H1 (cell line): ENCODE measurements at regions of chr22 and their contacts with region 1.

Region 1: DNA sequence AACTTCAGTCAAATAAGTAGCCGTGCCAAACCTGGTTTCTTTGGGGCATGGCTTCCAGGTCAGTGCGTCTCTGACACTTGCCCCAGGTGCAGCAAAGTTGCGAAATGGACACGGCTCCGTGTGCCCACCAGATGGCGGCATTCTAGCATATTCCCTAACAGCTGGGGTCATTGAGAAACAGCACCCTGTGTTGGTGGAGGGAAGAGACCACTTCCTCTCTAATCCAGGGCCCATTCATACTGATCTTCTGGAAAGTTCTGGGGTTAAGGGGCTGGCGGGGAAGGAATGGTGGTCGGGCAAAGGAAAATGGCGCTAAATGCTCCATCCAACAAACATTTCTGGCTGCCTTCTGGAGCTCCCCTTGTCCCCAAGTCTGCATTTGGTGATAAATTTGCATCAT is 141.2 kb upstream of the TIMP3 start:
- DNase-seq: peak; percentile 36 to 80
- H3K4me3 ChIP-seq: no peak overlapping the region
- H3K27ac ChIP-seq: no peak overlapping the region
- H3K4me1 ChIP-seq: no peaks in the 10 kb centered on the region
- H3K27me3 ChIP-seq: no peaks in the 10 kb centered on the region; a peak in 3 of 7 replicates
- CTCF ChIP-seq: peak; percentile 85 to 91 (median 88)
- EP300 ChIP-seq: no peak
- POLR2A ChIP-seq: no peak
- RAD21 ChIP-seq: peak; percentile 82 to 84

Region 2: DNA sequence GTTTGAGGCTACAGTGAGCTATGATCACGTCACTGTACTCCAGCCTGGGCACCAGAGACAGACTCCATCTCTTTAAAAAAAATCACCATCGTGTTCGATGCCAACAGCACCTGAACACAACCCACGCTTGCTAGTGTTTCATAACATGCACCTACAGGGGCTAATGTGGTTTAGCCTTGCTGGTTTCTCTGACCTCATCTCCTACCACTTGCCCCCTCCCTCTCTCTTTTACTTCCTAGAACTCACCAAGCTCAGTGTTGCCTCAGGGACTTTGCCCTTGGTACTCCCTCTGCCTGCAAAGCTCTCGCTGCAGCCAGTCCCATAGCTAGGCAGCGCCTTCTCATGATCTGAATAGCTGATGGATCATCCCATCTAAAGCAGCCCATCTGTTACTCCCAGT is 85.9 kb before region 1 on chr22:
- CTCF ChIA-PET with region 1: no interaction called
- POLR2A ChIA-PET with region 1: no interaction called
- DNase-seq: no peak
- H3K4me3 ChIP-seq: no peak overlapping the region
- H3K27ac ChIP-seq: no peak overlapping the region
- H3K4me1 ChIP-seq: no peaks in the 10 kb centered on the region
- H3K27me3 ChIP-seq: peaks cover 0 to 5% (median 0%) of the 10 kb centered on the region in 4 experiments; a peak in 2 of 7 replicates
- CTCF ChIP-seq: no peak
- EP300 ChIP-seq: no peak
- POLR2A ChIP-seq: no peak
- RAD21 ChIP-seq: no peak

Region 3: DNA sequence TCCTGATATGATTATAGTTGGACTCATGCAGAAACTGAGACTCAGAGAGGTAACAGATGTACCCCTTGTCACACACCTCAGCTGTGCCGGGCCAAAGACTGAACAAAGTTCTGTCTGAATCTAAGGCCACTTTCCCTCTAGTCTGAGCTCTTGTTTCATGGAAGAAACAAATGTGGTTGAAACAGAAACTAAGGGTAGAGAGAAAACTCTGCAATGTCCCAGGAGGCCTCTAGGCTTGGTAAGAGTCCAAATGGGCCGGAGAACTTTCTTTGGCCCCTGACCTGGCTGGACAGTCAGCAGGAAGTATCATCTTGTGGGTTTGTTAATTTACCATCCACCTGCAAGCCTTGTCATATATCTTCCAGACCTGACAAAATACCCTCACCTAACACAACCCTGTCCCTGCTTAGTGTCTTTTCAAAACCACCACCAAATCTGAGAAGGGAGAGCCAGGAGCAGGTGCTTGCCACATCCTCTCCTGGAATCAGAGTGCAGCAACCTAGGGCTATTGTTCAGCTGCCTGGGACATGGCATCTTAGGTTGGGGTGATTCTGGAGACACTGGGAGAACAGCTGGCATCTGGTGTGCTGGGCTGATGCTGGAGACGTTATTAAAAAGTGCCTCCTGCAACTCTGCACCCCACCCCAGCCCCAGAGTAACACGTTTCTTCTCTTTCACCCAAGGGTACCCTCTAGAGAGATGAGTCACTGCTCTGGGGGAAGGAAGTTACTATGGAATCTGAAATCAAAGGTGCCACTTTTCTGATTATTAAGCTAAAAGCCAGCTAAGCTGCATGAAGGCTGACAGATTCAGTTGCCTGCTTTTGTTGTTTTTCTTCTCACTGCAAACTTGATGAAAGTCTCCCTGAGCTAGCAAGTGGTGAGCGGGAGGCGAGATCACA is 14.9 kb after region 1 on chr22:
- CTCF ChIA-PET with region 1: interaction called, 10 read pairs
- POLR2A ChIA-PET with region 1: no interaction called
- DNase-seq: no peak
- H3K4me3 ChIP-seq: no peak overlapping the region
- H3K27ac ChIP-seq: no peak overlapping the region
- H3K4me1 ChIP-seq: no peaks in the 10 kb centered on the region
- H3K27me3 ChIP-seq: no peaks in the 10 kb centered on the region; a peak in 1 of 7 replicates
- CTCF ChIP-seq: no peak
- EP300 ChIP-seq: no peak
- POLR2A ChIP-seq: no peak
- RAD21 ChIP-seq: no peak

Region 4: GRCh38 chr22:32706149-32706548 is 45.9 kb after region 1 on chr22:
- CTCF ChIA-PET with region 1: no interaction called
- POLR2A ChIA-PET with region 1: no interaction called
- DNase-seq: no peak
- H3K4me3 ChIP-seq: no peak overlapping the region
- H3K27ac ChIP-seq: no peak overlapping the region
- H3K4me1 ChIP-seq: no peaks in the 10 kb centered on the region
- H3K27me3 ChIP-seq: no peaks in the 10 kb centered on the region
- CTCF ChIP-seq: no peak
- EP300 ChIP-seq: no peak
- POLR2A ChIP-seq: no peak
- RAD21 ChIP-seq: no peak